ENCODE measurements at regions of chr1 and their contacts with region 1.

Region 1: GRCh38 chr1:7646981-7647901 is 123.9 kb upstream of the VAMP3 start:
- DNase-seq: peak; percentile 82
- ATAC-seq: peak; percentile 48 to 50
- H3K4me3 ChIP-seq: no peak overlapping the region
- H3K27ac ChIP-seq: no peak overlapping the region
- H3K4me1 ChIP-seq: peaks cover 41% of the 10 kb centered on the region
- H3K27me3 ChIP-seq: peaks cover 4% of the 10 kb centered on the region
- CTCF ChIP-seq: peak; percentile 93

Region 2: DNA sequence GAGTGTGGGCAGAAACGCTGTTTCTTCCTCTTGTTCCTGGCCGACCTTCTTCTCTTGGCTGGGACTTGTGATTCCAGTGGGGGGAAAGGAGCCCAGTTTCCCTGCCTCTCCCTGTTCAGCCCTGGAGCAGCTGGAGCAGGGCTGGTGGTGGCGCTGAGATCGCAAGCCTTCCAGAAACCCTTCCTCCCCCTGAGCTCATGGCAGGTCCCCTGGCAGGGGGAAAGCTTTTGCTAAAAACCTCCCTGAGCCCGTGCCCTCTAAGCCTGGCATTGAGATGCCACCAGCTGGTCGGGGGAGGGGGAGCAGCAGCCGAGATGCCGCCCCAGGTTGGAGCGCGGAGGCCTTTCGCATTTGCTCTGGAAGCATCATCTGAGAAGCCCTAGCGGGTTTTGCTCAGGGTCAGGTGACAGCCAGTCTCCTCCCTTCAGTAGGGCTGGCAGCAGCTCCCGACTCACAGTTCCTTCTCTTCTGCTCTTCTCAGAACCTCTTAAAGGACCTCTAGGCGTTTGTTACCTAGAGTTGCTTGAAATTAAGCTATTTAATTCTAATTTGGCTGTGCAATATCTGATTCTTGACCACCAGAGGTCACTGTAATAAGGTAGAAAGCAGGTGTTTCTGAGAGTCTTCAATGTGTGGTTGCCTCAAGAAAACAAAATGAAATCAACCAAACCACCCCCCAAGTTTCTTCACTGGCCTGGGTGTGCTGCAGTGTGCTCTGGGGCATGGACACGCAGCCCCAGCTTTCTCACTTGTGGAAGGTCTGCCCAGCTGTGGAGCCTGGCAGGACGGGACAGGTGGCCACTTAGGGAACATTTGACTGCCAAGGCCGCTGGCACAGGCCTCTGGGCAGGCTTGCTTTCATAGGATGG is 604.7 kb before region 1 on chr1:
- intact Hi-C with region 1: loop called (anchors 10 kb)
- DNase-seq: no peak
- ATAC-seq: no peak
- H3K4me3 ChIP-seq: no peak overlapping the region
- H3K27ac ChIP-seq: no peak overlapping the region
- H3K4me1 ChIP-seq: no peaks in the 10 kb centered on the region
- H3K27me3 ChIP-seq: peaks cover 33% of the 10 kb centered on the region
- CTCF ChIP-seq: peak; percentile 44